Activated T-helper 1 cell treated with anti-CD3 and anti-CD28 coated beads, Interleukin-12 subunit alpha, Interleukin-12 subunit beta, Interleukin-2, Interleukin-4 antibody, amounts not matched to agents 30 ng/mL and 10 ng/mL and 1 ng/mL, durations not matched to agents 14 hours and 24 hours and 36 hours (primary cell): ENCODE measurements at regions of chr7 and their contacts with region 1.

Region 1: GRCh38 chr7:150737265-150738055 is at the start of gene GIMAP5:
- DNase-seq: peak; percentile 51
- H3K4me3 Mint-ChIP-seq: peak within 1 kb of the TSS; percentile 97
- H3K27ac Mint-ChIP-seq: peak within 1 kb of the TSS; percentile 99
- H3K4me1 Mint-ChIP-seq: peaks cover 88% of the 10 kb centered on the region
- H3K27me3 Mint-ChIP-seq: no peaks in the 10 kb centered on the region
- total RNA-seq, gene GIMAP5: 53.8 and 59.7 TPM in 2 replicates

Region 2: DNA sequence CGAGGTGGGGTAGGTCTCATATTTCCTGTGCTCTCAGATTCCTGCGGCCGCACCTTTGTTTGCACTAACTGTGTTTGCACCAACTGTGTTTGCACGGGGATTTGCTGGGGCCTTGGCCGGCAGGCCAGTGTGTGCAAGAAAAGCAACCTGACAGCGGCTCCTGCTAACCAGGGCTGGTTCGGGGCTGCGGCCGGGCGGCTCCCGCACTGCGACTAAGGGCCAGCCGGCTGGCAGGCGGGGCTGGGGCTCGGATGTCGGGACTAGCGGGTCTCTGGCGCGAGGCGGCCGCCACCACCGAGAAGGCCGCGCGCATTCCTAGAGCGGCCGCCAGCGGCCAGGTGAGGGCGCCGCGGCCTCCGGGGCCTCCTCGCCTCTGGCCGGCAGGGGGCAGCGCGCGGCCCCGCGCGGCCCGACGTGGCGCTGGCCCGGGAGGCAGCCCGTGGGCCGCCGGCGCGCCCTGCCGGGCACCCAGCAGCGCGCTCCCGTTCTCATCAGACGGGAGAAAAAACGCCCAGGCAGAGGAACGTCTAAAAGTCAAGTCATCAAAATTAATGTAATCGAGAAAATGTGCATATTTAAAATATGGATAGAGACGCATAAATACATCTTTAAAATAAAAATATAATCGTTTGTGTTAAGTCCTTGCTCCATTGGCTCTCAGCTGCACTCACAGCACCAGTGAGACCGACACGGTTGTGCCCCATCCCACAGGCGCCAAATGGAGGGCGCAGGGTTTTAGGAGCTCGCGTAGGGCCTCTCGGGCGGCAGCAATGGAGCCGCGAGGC is 1315.1 kb before region 1 on chr7:
- intact Hi-C with region 1: no loop called
- DNase-seq: peak; percentile 73
- H3K4me3 Mint-ChIP-seq: peak overlapping the region; percentile 66
- H3K27ac Mint-ChIP-seq: peak overlapping the region; percentile 61
- H3K4me1 Mint-ChIP-seq: no peaks in the 10 kb centered on the region
- H3K27me3 Mint-ChIP-seq: peaks cover 4% of the 10 kb centered on the region

Region 3: GRCh38 chr7:150502519-150502918 is 234.9 kb before region 1 on chr7:
- intact Hi-C with region 1: loop called (anchors 5 kb)
- DNase-seq: no peak
- H3K4me3 Mint-ChIP-seq: peak overlapping the region; percentile 60
- H3K27ac Mint-ChIP-seq: peak overlapping the region; percentile 96
- H3K4me1 Mint-ChIP-seq: peaks cover 85% of the 10 kb centered on the region
- H3K27me3 Mint-ChIP-seq: no peaks in the 10 kb centered on the region

Region 4: DNA sequence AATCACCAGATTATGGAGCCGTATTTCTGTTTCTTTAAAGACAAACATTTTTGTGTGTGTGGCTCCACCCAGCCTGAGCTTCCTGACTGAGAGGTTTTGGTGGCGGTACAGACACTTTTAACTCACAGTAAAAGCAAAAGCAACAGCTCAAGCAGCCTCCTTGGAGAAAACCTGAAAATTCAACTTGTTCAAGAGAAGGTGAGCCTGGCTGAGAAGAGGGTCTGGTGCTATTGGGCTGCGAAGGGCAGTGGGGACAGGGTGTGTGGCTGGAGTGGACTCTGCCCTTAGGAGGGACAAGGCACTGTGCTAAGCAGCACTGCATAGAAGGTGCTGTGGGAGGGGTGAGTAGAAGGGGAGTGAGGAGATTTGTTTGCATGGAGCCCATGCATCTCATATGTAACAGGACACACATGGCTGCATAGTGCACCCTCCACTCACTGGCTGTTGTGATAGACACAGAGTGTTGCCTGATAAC is 222.7 kb before region 1 on chr7 and contains the start of gene GIMAP7:
- intact Hi-C with region 1: loop called (anchors 1 kb)
- DNase-seq: peak; percentile 68
- H3K4me3 Mint-ChIP-seq: peak within 1 kb of the TSS; percentile 96
- H3K27ac Mint-ChIP-seq: peak within 1 kb of the TSS; percentile 98
- H3K4me1 Mint-ChIP-seq: peaks cover 65% of the 10 kb centered on the region
- H3K27me3 Mint-ChIP-seq: no peaks in the 10 kb centered on the region
- total RNA-seq, gene GIMAP7: 46.9 and 55.1 TPM in 2 replicates

Region 5: DNA sequence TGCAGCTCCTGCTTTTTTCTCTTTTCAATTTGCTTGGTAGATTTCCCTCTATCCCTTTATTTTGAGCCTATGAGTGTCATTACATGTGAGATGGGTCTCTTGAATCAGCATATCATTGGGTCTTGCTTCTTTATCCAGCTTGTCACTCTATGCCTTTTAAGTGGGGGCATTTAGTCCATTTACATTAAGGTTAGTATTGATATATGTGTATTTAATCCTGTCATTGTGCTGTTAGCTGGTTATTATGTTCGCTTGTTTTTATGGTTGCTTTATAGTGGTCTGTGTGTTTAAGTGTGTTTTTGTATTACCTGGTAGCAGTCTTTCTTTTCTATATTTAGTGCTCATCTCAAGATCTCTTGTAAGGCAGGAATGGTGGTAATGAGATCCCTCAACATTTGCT is 205.8 kb before region 1 on chr7:
- intact Hi-C with region 1: no loop called
- DNase-seq: no peak
- H3K4me3 Mint-ChIP-seq: no peak overlapping the region
- H3K27ac Mint-ChIP-seq: no peak overlapping the region
- H3K4me1 Mint-ChIP-seq: no peaks in the 10 kb centered on the region
- H3K27me3 Mint-ChIP-seq: no peaks in the 10 kb centered on the region

Region 6: DNA sequence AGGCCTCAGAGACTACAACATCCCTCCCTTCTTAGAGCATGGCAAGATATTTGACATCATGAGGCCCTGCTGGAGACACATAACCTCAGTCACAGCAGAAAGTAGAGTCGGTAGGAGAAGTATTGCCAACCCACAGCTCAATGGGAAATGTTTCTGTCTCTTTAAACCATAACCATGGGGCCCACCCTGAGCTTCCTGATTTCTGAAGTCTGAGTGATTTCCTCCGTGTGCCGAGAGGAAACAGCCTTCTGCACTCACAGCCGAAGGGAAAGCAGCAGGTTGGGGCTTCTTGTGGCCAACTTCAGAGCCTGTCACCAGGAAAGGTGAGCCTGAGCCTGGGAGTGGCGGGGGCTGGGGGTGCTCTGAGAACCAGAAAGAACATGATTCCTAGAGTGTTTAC is 21.1 kb before region 1 on chr7 and contains the start of gene GIMAP1:
- intact Hi-C with region 1: loop called (anchors 1 kb)
- DNase-seq: peak; percentile 58
- H3K4me3 Mint-ChIP-seq: peak within 1 kb of the TSS; percentile 97
- H3K27ac Mint-ChIP-seq: peak within 1 kb of the TSS; percentile 75
- H3K4me1 Mint-ChIP-seq: peaks cover 64% of the 10 kb centered on the region
- H3K27me3 Mint-ChIP-seq: no peaks in the 10 kb centered on the region
- total RNA-seq, gene GIMAP1: 4.6 and 4.9 TPM in 2 replicates

Region 7: GRCh38 chr7:150722431-150722931 is 15.0 kb before region 1 on chr7:
- intact Hi-C with region 1: loop called (anchors 1 kb)
- DNase-seq: no peak
- H3K4me3 Mint-ChIP-seq: peak overlapping the region; percentile 74
- H3K27ac Mint-ChIP-seq: peak overlapping the region; percentile 71
- H3K4me1 Mint-ChIP-seq: peaks cover 81% of the 10 kb centered on the region
- H3K27me3 Mint-ChIP-seq: no peaks in the 10 kb centered on the region